ENCODE measurements at regions of chr1 and their contacts with region 1.

Region 1: GRCh38 chr1:168342572-168343280 is 62.0 kb downstream of the TBX19 start:
- DNase-seq: peak; percentile 84
- H3K4me3 ChIP-seq: peak overlapping the region; percentile 15
- H3K4me3 Mint-ChIP-seq: peak overlapping the region; percentile 60
- H3K27ac Mint-ChIP-seq: no peak overlapping the region
- H3K4me1 ChIP-seq: peaks cover 5% of the 10 kb centered on the region; the same call in 1 of the 2 replicates
- H3K4me1 Mint-ChIP-seq: peaks cover 8% of the 10 kb centered on the region
- H3K27me3 ChIP-seq: no peaks in the 10 kb centered on the region
- H3K27me3 Mint-ChIP-seq: no peaks in the 10 kb centered on the region
- CTCF ChIP-seq: peak; percentile 77 to 86

Region 2: GRCh38 chr1:168234846-168235547 is 107.7 kb before region 1 on chr1:
- CTCF ChIA-PET with region 1: interaction called, 15 read pairs
- POLR2A ChIA-PET with region 1: no interaction called
- intact Hi-C with region 1: no loop called
- DNase-seq: peak; percentile 59 to 67
- H3K4me3 ChIP-seq: no peak overlapping the region
- H3K4me3 Mint-ChIP-seq: no peak overlapping the region
- H3K27ac Mint-ChIP-seq: peak overlapping the region; percentile 44
- H3K4me1 ChIP-seq: peaks cover 36% of the 10 kb centered on the region
- H3K4me1 Mint-ChIP-seq: peaks cover 38% of the 10 kb centered on the region
- H3K27me3 ChIP-seq: no peaks in the 10 kb centered on the region
- H3K27me3 Mint-ChIP-seq: no peaks in the 10 kb centered on the region
- CTCF ChIP-seq: peak; percentile 58 to 65

Region 3: GRCh38 chr1:168360151-168361021 is 17.7 kb after region 1 on chr1:
- CTCF ChIA-PET with region 1: interaction called, 45 read pairs
- POLR2A ChIA-PET with region 1: interaction called, 4 read pairs
- intact Hi-C with region 1: loop called (anchors 1 kb)
- DNase-seq: peak; percentile 54 to 57
- H3K4me3 ChIP-seq: no peak overlapping the region
- H3K4me3 Mint-ChIP-seq: peak overlapping the region; percentile 22
- H3K27ac Mint-ChIP-seq: peak overlapping the region; percentile 36
- H3K4me1 ChIP-seq: peaks cover 50% of the 10 kb centered on the region
- H3K4me1 Mint-ChIP-seq: peaks cover 43% of the 10 kb centered on the region
- H3K27me3 ChIP-seq: no peaks in the 10 kb centered on the region
- H3K27me3 Mint-ChIP-seq: no peaks in the 10 kb centered on the region
- CTCF ChIP-seq: no peak

Region 4: DNA sequence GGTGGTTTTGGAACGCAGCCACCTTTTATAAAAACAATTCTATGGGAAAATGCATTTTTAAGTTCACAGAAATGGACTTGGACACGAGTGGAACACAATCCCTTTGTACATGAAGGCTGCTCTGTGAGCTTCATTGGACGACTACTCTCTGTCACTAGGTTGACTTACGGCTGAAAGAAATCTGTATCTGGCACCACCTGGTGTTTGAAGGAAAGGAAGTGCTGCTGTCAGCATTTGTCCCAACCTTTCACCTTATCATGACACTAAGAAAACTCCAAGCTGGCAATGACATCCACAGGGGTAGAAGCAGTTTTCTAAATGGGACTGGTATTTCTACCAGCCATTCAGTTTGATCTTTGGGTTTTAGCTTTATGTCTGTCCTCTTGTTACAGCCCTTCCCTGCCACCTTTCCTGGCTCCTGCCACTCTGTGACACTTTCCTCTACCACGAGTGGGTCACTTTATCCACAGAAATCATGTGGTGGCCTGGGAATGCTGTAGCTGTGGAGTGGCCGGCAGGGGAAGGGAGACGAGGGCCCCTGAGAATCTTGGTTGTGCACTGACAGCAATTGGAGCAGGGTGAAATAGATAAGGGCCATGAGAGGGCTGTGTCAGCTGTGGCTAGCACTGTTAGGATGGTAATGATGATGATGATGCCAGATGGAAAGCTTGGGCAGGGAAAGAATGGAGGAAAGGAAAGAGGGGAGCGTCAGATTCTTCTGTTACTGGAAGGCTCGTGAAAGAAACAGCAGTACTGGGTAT is 23.2 kb after region 1 on chr1:
- CTCF ChIA-PET with region 1: interaction called, 45 read pairs
- POLR2A ChIA-PET with region 1: interaction called, 4 read pairs
- intact Hi-C with region 1: loop called (anchors 1 kb)
- DNase-seq: peak in 1 of 2 experiments; percentile 32
- H3K4me3 ChIP-seq: no peak overlapping the region
- H3K4me3 Mint-ChIP-seq: no peak overlapping the region
- H3K27ac Mint-ChIP-seq: no peak overlapping the region
- H3K4me1 ChIP-seq: peaks cover 35% of the 10 kb centered on the region
- H3K4me1 Mint-ChIP-seq: peaks cover 52% of the 10 kb centered on the region
- H3K27me3 ChIP-seq: no peaks in the 10 kb centered on the region
- H3K27me3 Mint-ChIP-seq: no peaks in the 10 kb centered on the region
- CTCF ChIP-seq: peak; percentile 41 to 47

Region 5: GRCh38 chr1:168439456-168440375 is 97.0 kb after region 1 on chr1:
- CTCF ChIA-PET with region 1: interaction called, 14 read pairs
- POLR2A ChIA-PET with region 1: no interaction called
- intact Hi-C with region 1: loop called (anchors 2 kb)
- DNase-seq: peak; percentile 73 to 76
- H3K4me3 ChIP-seq: no peak overlapping the region
- H3K4me3 Mint-ChIP-seq: no peak overlapping the region
- H3K27ac Mint-ChIP-seq: no peak overlapping the region
- H3K4me1 ChIP-seq: peaks cover 8% of the 10 kb centered on the region; the same call in 1 of the 2 replicates
- H3K4me1 Mint-ChIP-seq: peaks cover 29% of the 10 kb centered on the region
- H3K27me3 ChIP-seq: no peaks in the 10 kb centered on the region
- H3K27me3 Mint-ChIP-seq: no peaks in the 10 kb centered on the region
- CTCF ChIP-seq: peak; percentile 68 to 80

Region 6: DNA sequence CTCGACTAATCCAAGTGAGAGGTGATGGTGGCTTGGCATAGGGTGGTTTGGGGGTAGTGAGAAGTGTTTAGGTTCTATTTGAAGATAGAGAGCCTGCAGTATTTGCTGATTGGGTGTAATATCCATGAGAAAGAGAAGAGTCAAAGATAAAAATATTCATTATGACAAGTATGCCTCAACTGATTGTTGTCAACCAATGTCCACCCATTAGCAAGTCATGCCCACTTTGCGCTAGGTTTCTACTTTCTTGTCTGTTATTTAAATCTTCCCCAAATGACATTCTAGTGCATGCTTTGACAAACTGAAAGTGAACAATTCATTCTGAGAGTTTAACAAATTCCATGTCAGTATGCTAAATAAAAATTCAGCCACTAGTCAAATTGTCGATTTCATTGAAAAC is 229.9 kb after region 1 on chr1:
- CTCF ChIA-PET with region 1: interaction called, 7 read pairs
- POLR2A ChIA-PET with region 1: no interaction called
- intact Hi-C with region 1: loop called (anchors 1 kb)
- DNase-seq: no peak
- H3K4me3 ChIP-seq: no peak overlapping the region
- H3K4me3 Mint-ChIP-seq: no peak overlapping the region
- H3K27ac Mint-ChIP-seq: no peak overlapping the region
- H3K4me1 ChIP-seq: 0 out of 2 replicates have a peak, but pooled peaks cover 7% of the 10 kb centered on the region
- H3K4me1 Mint-ChIP-seq: no peaks in the 10 kb centered on the region
- H3K27me3 ChIP-seq: no peaks in the 10 kb centered on the region
- H3K27me3 Mint-ChIP-seq: no peaks in the 10 kb centered on the region
- CTCF ChIP-seq: no peak